Ascending aorta (tissue), 2 donors: ENCODE measurements at regions of chr14 and their contacts with region 1.

Region 1: GRCh38 chr14:22822571-22823098 is 7.1 kb upstream of the MRPL52 start:
- DNase-seq: peak in 1 of 2 donors; percentile 90
- H3K4me3 ChIP-seq: peak overlapping the region; percentile 66 to 70
- H3K27ac ChIP-seq: peak overlapping the region; percentile 77 to 79
- H3K4me1 ChIP-seq: peaks cover 6 to 42% of the 10 kb centered on the region in 2 donors
- H3K27me3 ChIP-seq: no peaks in the 10 kb centered on the region
- CTCF ChIP-seq: peak; percentile 68 to 92 (median 90)

Region 2: DNA sequence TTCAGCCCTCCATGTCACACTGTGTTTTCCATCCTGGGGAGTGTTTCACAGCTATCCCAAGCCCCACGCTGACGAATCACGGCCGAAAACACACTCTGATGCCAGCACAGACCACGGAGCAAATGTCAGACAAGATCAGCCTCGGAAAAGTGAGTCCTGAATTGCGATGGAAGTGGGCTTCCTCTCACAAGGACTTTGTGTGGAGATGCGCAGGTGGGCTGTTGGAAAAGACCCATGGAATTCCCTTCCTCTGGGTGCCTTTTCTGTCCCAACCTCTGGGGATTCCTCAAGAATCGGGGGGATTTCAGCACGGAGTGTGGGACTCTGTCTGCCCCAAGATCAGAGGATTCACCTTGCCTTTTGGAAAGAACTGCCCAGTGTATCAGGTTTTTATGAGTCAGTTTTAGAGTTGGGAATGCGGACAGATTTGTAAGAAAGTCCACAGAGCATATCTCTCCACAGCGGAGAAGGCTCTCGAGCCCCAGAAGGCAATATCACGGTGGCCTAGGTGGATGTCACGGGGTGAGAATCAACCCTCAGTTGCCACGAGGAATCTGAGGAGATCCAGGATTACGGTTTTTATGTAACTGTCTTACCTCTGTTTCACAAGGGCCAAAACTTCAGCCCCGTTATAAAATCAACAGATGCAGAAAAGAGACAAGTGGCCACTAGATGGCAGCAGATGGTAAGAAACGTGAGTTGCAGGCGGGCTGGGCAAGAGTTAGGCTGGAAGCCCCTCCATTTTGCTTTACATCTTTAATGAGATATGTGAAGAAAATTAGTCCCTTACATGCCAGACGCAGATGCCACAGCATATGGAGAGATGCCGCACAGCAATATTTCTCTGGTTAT is 435.5 kb before region 1 on chr14:
- intact Hi-C with region 1: loop called (anchors 10 kb)
- DNase-seq: peak in 1 of 2 donors; percentile 87
- H3K4me3 ChIP-seq: peak overlapping the region in 1 of 2 donors; percentile 52
- H3K27ac ChIP-seq: no peak overlapping the region
- H3K4me1 ChIP-seq: peaks cover 0 to 3% of the 10 kb centered on the region in 2 donors
- H3K27me3 ChIP-seq: no peaks in the 10 kb centered on the region
- CTCF ChIP-seq: peak; percentile 74 to 77 (median 77)

Region 3: DNA sequence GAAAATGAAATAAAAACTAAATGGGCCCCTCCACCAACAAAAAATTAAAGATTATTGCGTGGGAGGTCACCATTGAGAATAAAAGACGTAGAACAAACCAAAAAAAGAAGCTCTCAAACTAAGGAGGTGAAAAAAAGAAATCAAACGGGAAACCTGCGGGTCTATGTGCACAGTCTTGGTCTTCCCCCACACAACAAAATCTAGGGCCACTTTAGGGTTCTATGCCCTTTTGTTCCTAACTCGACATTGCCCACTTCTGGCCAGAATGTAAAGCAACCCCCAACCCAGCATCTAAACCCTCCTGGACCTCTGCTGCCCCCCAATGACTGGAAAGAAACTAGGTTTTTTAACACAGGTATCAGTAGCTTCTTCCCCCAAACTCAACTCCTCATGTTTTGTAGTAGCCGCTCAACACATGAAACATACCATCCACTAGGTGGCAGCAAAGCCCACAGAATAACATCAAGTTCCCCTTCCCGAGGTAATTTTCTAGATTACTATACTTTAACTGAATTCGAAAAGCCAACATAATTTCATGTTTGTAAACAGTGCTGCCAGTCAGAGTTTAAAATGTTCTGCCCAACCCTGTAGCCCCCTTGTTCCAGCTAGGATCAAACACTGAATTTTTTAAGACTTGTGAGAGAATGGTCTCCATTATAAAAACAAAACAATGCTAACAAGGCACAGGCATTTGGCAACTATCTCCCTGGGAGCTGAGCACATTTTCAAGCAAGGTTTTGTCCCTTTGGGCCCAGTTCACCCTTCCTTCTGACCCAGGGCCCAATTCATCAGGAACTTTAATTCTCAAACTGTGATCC is 252.3 kb before region 1 on chr14:
- intact Hi-C with region 1: loop called (anchors 2 kb)
- DNase-seq: peak in 1 of 2 donors; percentile 90
- H3K4me3 ChIP-seq: no peak overlapping the region
- H3K27ac ChIP-seq: peak overlapping the region; percentile 21 to 55
- H3K4me1 ChIP-seq: peaks cover 0 to 9% of the 10 kb centered on the region in 2 donors
- H3K27me3 ChIP-seq: no peaks in the 10 kb centered on the region
- CTCF ChIP-seq: peak; percentile 69 to 88 (median 74)

Region 4: DNA sequence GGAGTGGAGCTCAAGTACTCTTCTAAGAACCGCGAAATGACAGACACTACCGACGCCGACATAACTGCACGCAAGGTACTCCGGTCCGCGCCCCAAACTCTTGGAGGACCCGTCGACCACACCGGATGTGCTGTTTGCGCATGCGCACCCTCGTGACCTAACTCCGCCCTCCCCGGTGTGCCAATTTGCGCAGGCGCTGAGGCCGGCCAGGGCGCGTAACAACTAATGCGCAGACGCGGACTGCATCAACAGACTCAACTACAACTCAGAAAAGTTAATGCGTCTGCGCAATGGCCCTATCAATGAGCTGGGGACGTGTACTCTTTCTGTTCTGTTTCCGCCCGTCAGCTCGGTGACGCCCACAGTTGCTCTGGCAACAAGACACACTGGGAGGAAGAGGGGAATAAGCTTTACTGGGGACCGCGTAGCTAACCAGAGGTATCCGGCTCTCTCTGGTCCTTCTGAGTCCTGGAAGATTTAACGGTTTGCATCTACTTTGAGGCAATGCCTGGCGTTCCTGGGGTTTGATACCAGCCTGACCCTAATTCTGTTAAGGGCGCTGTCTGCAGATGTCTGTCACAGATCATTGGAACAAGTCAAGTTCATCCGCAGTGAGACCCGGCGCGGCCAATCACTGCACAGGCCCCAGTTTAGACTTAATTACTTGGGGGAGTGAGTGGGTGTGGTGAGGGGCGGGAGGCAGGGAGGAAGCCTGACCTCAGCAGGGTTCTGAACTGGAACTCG is 233.4 kb before region 1 on chr14 and contains the start of gene DAD1:
- intact Hi-C with region 1: loop called (anchors 5 kb)
- DNase-seq: peak; percentile 98 to 100
- H3K4me3 ChIP-seq: peak within 1 kb of the TSS; percentile 67 to 76
- H3K27ac ChIP-seq: peak within 1 kb of the TSS; percentile 88 to 95
- H3K4me1 ChIP-seq: peaks cover 0 to 21% of the 10 kb centered on the region in 2 donors
- H3K27me3 ChIP-seq: no peaks in the 10 kb centered on the region
- CTCF ChIP-seq: peak in 1 of 3 experiments; percentile 34
- total RNA-seq, gene DAD1: 186 TPM

Region 5: GRCh38 chr14:22766456-22767322 is 55.9 kb before region 1 on chr14 and contains the start of gene OXA1L:
- intact Hi-C with region 1: loop called (anchors 2 kb)
- DNase-seq: peak; percentile 89 to 98
- H3K4me3 ChIP-seq: peak within 1 kb of the TSS; percentile 84 to 94
- H3K27ac ChIP-seq: peak within 1 kb of the TSS; percentile 78 to 85
- H3K4me1 ChIP-seq: peaks cover 0 to 19% of the 10 kb centered on the region in 2 donors
- H3K27me3 ChIP-seq: no peaks in the 10 kb centered on the region
- CTCF ChIP-seq: no peak
- total RNA-seq, gene OXA1L: 68.3 TPM

Region 6: DNA sequence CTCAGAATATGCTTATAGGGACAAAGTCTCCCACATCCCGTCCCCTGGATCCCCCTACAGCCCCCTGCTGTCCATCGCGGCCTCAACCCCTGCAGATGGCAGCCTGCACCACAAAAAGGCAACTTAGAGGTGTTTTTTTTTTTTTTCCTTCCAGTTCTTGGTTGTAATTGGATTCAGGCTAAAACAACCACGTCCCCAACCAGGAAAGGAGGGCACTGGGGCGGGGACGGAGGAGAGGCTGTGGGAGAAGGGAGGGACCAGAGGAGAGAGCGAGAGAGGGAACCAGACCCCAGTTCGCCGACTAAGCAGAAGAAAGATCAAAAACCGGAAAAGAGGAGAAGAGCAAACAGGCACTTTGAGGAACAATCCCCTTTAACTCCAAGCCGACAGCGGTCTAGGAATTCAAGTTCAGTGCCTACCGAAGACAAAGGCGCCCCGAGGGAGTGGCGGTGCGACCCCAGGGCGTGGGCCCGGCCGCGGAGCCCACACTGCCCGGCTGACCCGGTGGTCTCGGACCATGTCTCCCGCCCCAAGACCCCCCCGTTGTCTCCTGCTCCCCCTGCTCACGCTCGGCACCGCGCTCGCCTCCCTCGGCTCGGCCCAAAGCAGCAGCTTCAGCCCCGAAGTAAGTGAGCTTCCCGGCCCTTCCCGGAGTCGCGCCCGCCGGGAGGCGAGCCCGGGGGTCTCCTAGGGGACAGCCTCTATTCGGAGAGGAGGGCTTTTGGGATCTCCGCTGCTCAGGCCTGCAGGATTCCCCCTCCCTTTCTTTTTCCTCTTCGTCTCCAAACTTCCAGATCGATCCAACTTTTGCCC is 13.9 kb after region 1 on chr14 and contains the start of gene MMP14:
- intact Hi-C with region 1: loop called (anchors 2 kb)
- DNase-seq: peak; percentile 67 to 94
- H3K4me3 ChIP-seq: peak within 1 kb of the TSS; percentile 68 to 86
- H3K27ac ChIP-seq: peak within 1 kb of the TSS; percentile 91 to 94
- H3K4me1 ChIP-seq: peaks cover 0 to 20% of the 10 kb centered on the region in 2 donors
- H3K27me3 ChIP-seq: no peaks in the 10 kb centered on the region
- CTCF ChIP-seq: peak in 2 of 3 experiments; percentile 51 to 85
- total RNA-seq, gene MMP14: 178 TPM

Region 7: DNA sequence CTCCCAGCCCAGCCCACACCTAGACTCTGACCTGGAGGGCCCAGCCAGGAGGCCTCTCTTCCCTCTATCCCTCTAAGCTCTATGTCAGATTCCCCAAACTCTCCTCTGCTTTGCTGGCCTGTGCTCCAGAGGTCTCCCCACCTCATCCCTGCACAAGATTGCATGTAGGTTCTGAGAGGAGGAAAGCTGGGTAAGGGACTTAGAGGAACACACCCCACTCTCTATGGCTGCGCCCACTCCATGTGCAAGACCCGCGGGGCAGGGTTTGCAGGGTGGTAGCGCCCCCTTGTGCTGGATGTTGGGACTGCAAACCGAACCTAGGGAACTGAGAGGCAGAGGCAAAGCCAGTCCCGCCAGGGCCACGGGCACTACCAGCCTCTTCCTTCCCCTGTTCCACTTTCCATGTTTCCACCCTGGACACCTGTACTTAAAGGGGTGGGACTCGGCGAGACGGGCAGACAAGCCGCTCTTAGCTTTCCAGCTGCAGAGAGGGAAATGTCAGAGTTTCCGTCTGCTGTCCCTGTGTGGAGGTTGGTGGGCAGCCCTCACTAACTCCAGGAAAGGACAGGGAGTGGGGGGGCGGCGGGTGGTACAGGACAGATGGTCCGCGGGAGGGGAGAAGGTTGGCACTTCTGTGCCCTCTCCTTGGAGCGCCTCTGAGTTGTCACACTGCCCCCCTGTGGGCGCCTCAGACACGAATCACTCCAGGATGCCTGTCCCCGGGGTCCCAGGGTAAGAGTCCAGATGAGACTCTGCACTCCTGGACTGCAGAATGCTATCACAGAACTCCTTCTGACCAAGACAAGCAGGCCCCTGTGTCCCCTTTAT is 30.5 kb after region 1 on chr14:
- intact Hi-C with region 1: loop called (anchors 1 kb)
- DNase-seq: peak; percentile 58 to 96
- H3K4me3 ChIP-seq: peak overlapping the region; percentile 42 to 66
- H3K27ac ChIP-seq: peak overlapping the region; percentile 87 to 91
- H3K4me1 ChIP-seq: peaks cover 36 to 43% of the 10 kb centered on the region in 2 donors
- H3K27me3 ChIP-seq: no peaks in the 10 kb centered on the region
- CTCF ChIP-seq: peak; percentile 87 to 95 (median 93)